ENCODE measurements at regions of chr5 and their contacts with region 1.

Region 1: GRCh38 chr5:131382407-131383395 is 118.8 kb downstream of the CDC42SE2 start:
- DNase-seq: peak; percentile 57 to 63
- H3K4me3 ChIP-seq: no peak overlapping the region
- H3K4me3 Mint-ChIP-seq: no peak overlapping the region
- H3K27ac Mint-ChIP-seq: no peak overlapping the region
- H3K4me1 ChIP-seq: peaks cover 9% of the 10 kb centered on the region; the same call in 1 of the 2 replicates
- H3K4me1 Mint-ChIP-seq: peaks cover 8% of the 10 kb centered on the region
- H3K27me3 ChIP-seq: no peaks in the 10 kb centered on the region
- H3K27me3 Mint-ChIP-seq: no peaks in the 10 kb centered on the region
- CTCF ChIP-seq: peak; percentile 63 to 81

Region 2: GRCh38 chr5:131151216-131151615 is 231.5 kb before region 1 on chr5:
- CTCF ChIA-PET with region 1: no interaction called
- POLR2A ChIA-PET with region 1: no interaction called
- intact Hi-C with region 1: loop called (anchors 1 kb)
- DNase-seq: no peak
- H3K4me3 ChIP-seq: no peak overlapping the region
- H3K4me3 Mint-ChIP-seq: no peak overlapping the region
- H3K27ac Mint-ChIP-seq: no peak overlapping the region
- H3K4me1 ChIP-seq: no peaks in the 10 kb centered on the region
- H3K4me1 Mint-ChIP-seq: no peaks in the 10 kb centered on the region
- H3K27me3 ChIP-seq: no peaks in the 10 kb centered on the region
- H3K27me3 Mint-ChIP-seq: no peaks in the 10 kb centered on the region
- CTCF ChIP-seq: no peak

Region 3: DNA sequence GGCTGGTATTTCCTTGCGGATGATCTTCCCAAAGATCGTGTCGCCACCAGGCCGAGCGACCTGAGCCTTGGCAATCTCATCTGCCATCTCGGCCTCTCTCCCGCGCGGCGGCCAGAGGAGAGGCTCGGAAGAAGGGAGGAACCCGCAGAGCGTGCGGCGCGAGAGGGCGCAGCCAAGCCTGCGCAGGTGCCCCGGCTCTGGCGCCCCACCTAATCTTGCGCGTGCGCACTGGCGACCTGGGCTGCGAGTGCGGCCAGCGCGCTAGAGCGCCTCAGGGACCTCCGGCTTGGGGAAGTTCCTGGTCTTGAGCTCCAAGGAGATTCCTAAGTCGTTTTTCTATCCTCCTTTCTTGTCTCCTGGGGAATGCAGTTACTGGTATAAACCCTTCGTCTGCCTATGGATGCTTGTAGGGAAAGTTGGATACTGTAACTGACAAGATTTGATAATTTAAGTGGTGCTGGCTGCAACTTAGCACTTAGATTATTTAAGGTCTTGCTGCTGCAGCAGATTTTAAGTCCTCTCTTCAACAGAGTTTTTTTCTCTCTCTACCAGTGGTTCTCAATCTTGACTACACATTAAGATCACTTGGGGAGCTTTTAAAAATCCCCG is 217.5 kb before region 1 on chr5 and contains the start of gene HINT1:
- CTCF ChIA-PET with region 1: interaction called, 9 read pairs
- POLR2A ChIA-PET with region 1: no interaction called
- intact Hi-C with region 1: loop called (anchors 1 kb)
- DNase-seq: peak; percentile 94 to 97
- H3K4me3 ChIP-seq: peak within 1 kb of the TSS; percentile 100
- H3K4me3 Mint-ChIP-seq: peak within 1 kb of the TSS; percentile 70
- H3K27ac Mint-ChIP-seq: peak within 1 kb of the TSS; percentile 26
- H3K4me1 ChIP-seq: peaks cover 9% of the 10 kb centered on the region
- H3K4me1 Mint-ChIP-seq: peaks cover 21% of the 10 kb centered on the region
- H3K27me3 ChIP-seq: no peaks in the 10 kb centered on the region
- H3K27me3 Mint-ChIP-seq: no peaks in the 10 kb centered on the region
- CTCF ChIP-seq: peak in 1 of 2 experiments; percentile 39
- total RNA-seq, gene HINT1: 228 and 243 TPM in 2 replicates

Region 4: DNA sequence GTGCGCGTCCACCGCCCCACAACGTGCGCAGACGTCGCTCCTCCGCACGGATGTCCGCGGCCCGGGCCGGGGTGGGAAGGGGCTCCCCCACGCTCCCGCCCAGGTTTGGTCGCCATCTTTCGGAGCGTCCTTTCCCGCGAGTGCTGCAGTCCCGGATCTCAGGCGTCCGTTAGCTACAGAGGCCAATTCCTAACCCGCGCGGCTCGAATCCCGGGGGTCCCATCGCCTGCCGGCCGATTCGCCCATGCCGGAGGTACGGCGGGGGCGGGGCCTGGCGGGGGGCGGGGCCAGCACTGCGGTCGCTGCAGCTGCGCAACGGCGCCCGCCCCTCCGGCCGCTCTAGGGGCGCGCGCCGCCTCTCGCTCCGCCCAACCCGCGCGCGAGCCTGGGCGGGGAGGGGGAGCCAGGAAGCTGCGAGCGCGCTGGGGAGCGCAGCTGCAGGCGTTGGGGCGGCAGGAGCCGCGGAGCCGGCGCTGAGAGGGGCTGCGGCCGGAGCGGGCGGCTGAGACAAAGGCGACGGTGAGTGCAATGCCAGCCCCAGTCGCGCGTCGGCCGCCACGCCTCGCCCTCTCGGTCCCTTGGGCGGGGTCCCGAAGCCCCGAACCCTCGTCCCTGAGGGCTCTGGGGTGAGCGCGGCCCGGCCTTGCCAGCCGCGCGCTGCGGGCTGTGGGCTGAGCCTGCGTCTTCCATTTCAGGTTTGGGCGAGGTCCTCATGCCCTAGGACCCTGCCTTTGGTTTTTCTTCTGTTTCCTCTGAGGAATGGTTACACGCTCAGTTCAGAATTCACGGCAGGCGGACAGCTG is 118.9 kb before region 1 on chr5 and contains the start of gene CDC42SE2:
- CTCF ChIA-PET with region 1: interaction called, 6 read pairs
- POLR2A ChIA-PET with region 1: no interaction called
- intact Hi-C with region 1: loop called (anchors 1 kb)
- DNase-seq: peak; percentile 78 to 90
- H3K4me3 ChIP-seq: peak within 1 kb of the TSS; percentile 100
- H3K4me3 Mint-ChIP-seq: peak within 1 kb of the TSS; percentile 84
- H3K27ac Mint-ChIP-seq: peak within 1 kb of the TSS; percentile 79
- H3K4me1 ChIP-seq: peaks cover 10% of the 10 kb centered on the region; the same call in 1 of the 2 replicates
- H3K4me1 Mint-ChIP-seq: peaks cover 9% of the 10 kb centered on the region
- H3K27me3 ChIP-seq: no peaks in the 10 kb centered on the region
- H3K27me3 Mint-ChIP-seq: no peaks in the 10 kb centered on the region
- CTCF ChIP-seq: no peak
- total RNA-seq, gene CDC42SE2: 39.4 and 41.1 TPM in 2 replicates

Region 5: DNA sequence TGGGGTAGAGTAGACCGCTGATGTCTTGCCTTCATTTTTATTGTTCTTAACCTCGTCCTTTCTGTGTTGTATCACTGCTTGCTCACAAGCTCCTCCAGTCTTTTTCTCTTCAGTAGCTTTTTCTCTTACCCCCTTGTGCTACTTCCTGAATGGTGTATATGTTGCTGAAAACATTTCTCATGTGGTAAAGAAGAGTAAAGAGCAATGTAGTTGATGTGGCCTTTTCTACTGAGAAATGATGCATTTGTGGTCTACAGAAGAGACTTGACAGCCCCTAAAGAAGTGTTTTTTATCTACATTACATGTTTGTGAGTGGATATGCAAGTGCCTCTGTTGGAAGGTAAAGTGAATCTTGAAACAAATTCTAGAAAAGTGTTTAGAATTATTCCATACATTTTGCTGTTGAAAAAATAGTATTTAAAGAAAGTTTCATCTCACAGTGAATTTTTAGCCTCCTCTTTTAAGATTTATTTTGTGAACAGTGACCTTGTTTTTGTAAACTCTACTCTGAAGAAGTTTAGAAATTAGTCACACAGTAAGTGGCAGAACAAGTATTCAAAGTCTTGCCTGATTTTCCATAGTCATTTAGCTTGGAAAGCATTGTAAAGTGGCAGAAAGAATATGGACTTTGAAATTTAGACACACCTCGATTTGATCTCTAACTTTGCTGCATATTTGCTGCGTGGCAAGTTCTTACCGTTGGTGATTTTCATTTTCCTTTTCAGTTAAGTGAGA is 101.4 kb before region 1 on chr5:
- CTCF ChIA-PET with region 1: no interaction called
- POLR2A ChIA-PET with region 1: no interaction called
- intact Hi-C with region 1: loop called (anchors 2 kb)
- DNase-seq: peak in 1 of 2 experiments; percentile 11
- H3K4me3 ChIP-seq: peak overlapping the region; percentile 25
- H3K4me3 Mint-ChIP-seq: peak overlapping the region; percentile 68
- H3K27ac Mint-ChIP-seq: peak overlapping the region; percentile 72
- H3K4me1 ChIP-seq: peaks cover 22% of the 10 kb centered on the region
- H3K4me1 Mint-ChIP-seq: peaks cover 22% of the 10 kb centered on the region
- H3K27me3 ChIP-seq: no peaks in the 10 kb centered on the region
- H3K27me3 Mint-ChIP-seq: no peaks in the 10 kb centered on the region
- CTCF ChIP-seq: no peak

Region 6: DNA sequence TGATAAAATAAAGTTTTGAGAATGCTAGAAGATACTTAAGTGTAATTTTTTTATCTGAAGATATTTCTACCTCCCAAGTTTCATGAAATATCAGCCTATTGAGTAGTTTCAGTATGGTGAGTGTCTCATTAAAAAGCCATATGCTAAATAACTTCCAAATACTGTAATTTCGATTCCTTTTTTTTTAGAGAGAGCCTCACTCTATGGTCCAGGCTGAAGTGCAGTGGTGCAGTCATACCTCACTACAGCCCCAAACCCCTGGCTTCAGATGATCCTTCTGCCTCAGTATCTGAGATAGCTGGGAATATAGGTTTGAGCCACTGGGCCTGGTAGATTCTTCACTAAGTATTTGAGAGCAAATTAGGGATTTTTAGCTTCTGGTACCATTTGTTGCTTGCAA is 94.4 kb before region 1 on chr5:
- CTCF ChIA-PET with region 1: interaction called, 6 read pairs
- POLR2A ChIA-PET with region 1: no interaction called
- intact Hi-C with region 1: loop called (anchors 1 kb)
- DNase-seq: no peak
- H3K4me3 ChIP-seq: no peak overlapping the region
- H3K4me3 Mint-ChIP-seq: no peak overlapping the region
- H3K27ac Mint-ChIP-seq: no peak overlapping the region
- H3K4me1 ChIP-seq: no peaks in the 10 kb centered on the region
- H3K4me1 Mint-ChIP-seq: no peaks in the 10 kb centered on the region
- H3K27me3 ChIP-seq: no peaks in the 10 kb centered on the region
- H3K27me3 Mint-ChIP-seq: no peaks in the 10 kb centered on the region
- CTCF ChIP-seq: no peak

Region 7: DNA sequence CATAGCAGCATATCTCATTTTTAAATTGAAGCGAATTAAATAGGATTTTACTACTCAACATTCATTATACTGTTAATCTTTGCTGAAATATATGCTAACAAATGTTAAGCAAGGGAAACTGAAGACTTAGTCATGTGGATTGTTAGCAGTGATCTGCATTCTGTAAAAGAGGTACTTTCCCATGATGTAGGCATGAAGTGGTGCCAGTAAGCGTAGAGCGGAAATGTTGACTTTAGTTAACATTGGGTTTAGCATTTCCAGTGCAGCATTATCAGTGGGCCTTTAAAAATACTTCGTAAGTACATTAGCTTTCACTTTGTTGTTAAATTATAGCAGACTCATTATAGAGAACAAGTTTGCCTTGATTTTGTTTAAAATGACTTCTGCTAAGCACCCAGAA is 11.4 kb after region 1 on chr5:
- CTCF ChIA-PET with region 1: no interaction called
- POLR2A ChIA-PET with region 1: no interaction called
- intact Hi-C with region 1: no loop called
- DNase-seq: no peak
- H3K4me3 ChIP-seq: no peak overlapping the region
- H3K4me3 Mint-ChIP-seq: no peak overlapping the region
- H3K27ac Mint-ChIP-seq: peak overlapping the region; percentile 25
- H3K4me1 ChIP-seq: no peaks in the 10 kb centered on the region
- H3K4me1 Mint-ChIP-seq: no peaks in the 10 kb centered on the region
- H3K27me3 ChIP-seq: no peaks in the 10 kb centered on the region
- H3K27me3 Mint-ChIP-seq: no peaks in the 10 kb centered on the region
- CTCF ChIP-seq: no peak

Measured in Caco-2 (cell line).